ENCODE measurements at regions of chr1 and their contacts with region 1.

Region 1: GRCh38 chr1:84090447-84091245 is 53.4 kb upstream of the PRKACB start:
- DNase-seq: peak in 2 of 5 donors; percentile 40 to 57
- H3K4me3 ChIP-seq: peak overlapping the region; percentile 58
- H3K4me3 Mint-ChIP-seq: peak overlapping the region; percentile 59 to 87 (median 82)
- H3K27ac ChIP-seq: peak overlapping the region; percentile 0
- H3K27ac Mint-ChIP-seq: peak overlapping the region; percentile 86 to 95 (median 92)
- H3K4me1 ChIP-seq: peaks cover 19% of the 10 kb centered on the region
- H3K4me1 Mint-ChIP-seq: peaks cover 20 to 37% (median 32%) of the 10 kb centered on the region in 3 donors
- H3K27me3 ChIP-seq: no peaks in the 10 kb centered on the region
- H3K27me3 Mint-ChIP-seq: no peaks in the 10 kb centered on the region

Region 2: GRCh38 chr1:84020151-84020550 is 70.5 kb before region 1 on chr1:
- CTCF ChIA-PET with region 1: no interaction called
- POLR2A ChIA-PET with region 1: no interaction called
- DNase-seq: no peak
- H3K4me3 ChIP-seq: no peak overlapping the region
- H3K4me3 Mint-ChIP-seq: no peak overlapping the region
- H3K27ac ChIP-seq: no peak overlapping the region
- H3K27ac Mint-ChIP-seq: no peak overlapping the region
- H3K4me1 ChIP-seq: no peaks in the 10 kb centered on the region
- H3K4me1 Mint-ChIP-seq: no peaks in the 10 kb centered on the region
- H3K27me3 ChIP-seq: no peaks in the 10 kb centered on the region
- H3K27me3 Mint-ChIP-seq: peaks cover 2 to 8% of the 10 kb centered on the region in 2 donors

Region 3: GRCh38 chr1:84077476-84078107 is 13.1 kb before region 1 on chr1:
- CTCF ChIA-PET with region 1: interaction called, 11 read pairs
- POLR2A ChIA-PET with region 1: interaction called, 7 read pairs
- DNase-seq: peak; percentile 64 to 85 (median 80)
- H3K4me3 ChIP-seq: peak overlapping the region; percentile 54
- H3K4me3 Mint-ChIP-seq: peak overlapping the region; percentile 86 to 95 (median 90)
- H3K27ac ChIP-seq: peak overlapping the region; percentile 62
- H3K27ac Mint-ChIP-seq: peak overlapping the region; percentile 83 to 93 (median 92)
- H3K4me1 ChIP-seq: peaks cover 10% of the 10 kb centered on the region
- H3K4me1 Mint-ChIP-seq: peaks cover 14 to 28% (median 21%) of the 10 kb centered on the region in 3 donors
- H3K27me3 ChIP-seq: no peaks in the 10 kb centered on the region
- H3K27me3 Mint-ChIP-seq: no peaks in the 10 kb centered on the region